ENCODE measurements at regions of chr6 and their contacts with region 1.

Region 1: DNA sequence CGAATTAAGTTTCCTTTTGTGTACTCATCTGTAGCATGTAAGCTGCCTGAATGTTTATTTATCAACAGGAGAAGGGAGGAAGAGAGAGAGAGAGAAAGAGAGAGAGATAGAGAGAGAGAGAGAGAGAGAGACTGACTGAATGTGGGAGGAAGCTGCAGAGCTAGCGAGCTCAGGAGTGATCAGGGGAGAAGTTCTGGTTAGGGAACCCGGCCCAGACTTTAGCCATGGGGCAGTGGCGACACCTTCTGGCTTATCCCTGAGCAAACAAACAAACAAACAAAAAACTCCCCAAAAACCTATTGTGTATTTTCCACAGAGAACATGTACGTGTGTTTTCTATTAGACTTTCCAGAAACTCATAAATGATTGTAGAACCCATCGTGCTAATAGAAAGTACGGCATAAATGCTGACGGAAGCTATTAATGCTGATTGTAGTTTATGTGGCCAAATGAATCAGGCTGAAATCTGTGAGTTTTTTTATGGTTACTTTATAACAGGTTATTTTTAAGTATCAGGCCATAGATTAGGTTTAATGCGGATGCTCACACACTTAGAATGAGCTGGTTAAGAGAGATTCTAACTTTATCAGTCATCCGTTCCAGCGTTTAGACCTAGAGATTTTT is 92.8 kb downstream of the CLIC5 start:
- DNase-seq: peak; percentile 29
- H3K4me3 ChIP-seq: no peak overlapping the region
- H3K27ac ChIP-seq: no peak overlapping the region
- H3K4me1 ChIP-seq: no peaks in the 10 kb centered on the region
- H3K27me3 ChIP-seq: no peaks in the 10 kb centered on the region
- CTCF ChIP-seq: peak; percentile 53 to 90

Region 2: DNA sequence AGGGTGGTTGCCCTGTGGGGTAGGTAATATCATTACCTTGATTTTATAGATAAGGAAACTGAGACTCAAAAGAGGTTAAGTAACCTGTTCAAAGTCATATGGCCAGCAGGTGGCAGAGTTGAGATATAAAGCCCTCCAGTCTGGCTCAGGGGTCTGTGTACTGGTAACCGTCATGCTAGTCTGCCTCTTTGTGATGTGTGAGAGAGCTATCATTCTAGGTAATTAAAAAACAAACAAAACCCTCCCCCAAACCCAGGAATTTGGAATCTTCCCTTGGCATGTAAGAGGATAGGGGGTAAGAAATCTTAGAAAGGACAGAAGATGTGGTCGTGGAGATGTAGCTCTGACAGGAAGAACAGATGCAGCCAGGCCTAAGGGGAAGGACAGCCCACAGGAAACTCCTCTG is 1329.3 kb before region 1 on chr6:
- CTCF ChIA-PET with region 1: no interaction called
- dilution Hi-C with region 1: no loop called
- in situ Hi-C with region 1: no loop called
- intact Hi-C with region 1: loop called (anchors 1 kb)
- DNase-seq: no peak
- H3K4me3 ChIP-seq: no peak overlapping the region
- H3K27ac ChIP-seq: no peak overlapping the region
- H3K4me1 ChIP-seq: no peaks in the 10 kb centered on the region
- H3K27me3 ChIP-seq: no peaks in the 10 kb centered on the region
- CTCF ChIP-seq: peak; percentile 40 to 54

Region 3: DNA sequence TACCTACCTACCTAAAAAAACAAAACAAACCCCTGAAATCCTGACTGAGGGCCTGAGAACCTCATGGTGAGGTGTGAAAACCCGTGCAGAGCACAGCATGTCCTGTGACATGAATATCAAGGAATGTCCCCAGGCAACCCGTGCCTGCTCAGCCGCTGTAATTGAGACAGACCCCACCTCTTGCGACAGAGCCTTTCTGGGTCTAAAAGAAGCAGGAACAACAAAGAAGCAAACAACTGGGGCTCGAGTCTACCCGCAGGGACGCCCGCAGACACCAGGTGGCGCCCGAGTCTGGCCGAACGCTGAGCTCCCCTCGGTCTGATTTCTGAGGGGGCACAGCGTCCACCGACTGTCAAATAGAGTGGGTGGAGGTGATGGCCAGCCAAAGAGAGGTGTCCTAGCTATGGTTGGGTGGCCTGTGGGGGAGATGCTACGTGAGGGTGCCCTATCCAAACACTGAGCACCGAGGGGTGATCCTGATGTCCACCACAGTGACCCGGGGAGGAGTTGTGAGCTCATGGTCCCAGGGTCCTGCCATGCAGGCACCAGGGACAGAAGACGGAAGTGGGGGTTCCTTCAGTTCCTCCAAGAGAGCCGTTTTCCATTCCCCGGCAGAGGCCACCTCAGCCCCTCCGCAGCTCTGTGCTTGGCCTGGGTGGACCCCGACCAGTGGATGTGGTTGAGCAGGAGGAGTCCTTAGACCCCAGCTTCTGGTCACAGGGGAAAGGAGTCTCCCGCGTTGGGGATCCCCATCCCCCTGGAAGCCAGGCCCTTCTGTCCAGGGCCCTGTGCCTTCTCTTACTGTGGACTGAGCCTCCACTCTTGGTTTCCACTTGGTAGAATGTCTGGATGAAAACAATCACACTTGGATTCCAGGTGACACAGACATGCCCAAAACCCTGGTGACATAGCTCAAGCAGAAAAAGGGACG is 1267.2 kb before region 1 on chr6:
- CTCF ChIA-PET with region 1: no interaction called
- dilution Hi-C with region 1: no loop called
- in situ Hi-C with region 1: loop called in 1 of 2 experiments (anchors 25 kb)
- intact Hi-C with region 1: loop called (anchors 1 kb)
- DNase-seq: peak; percentile 22
- H3K4me3 ChIP-seq: no peak overlapping the region
- H3K27ac ChIP-seq: no peak overlapping the region
- H3K4me1 ChIP-seq: peaks cover 9% of the 10 kb centered on the region
- H3K27me3 ChIP-seq: no peaks in the 10 kb centered on the region
- CTCF ChIP-seq: peak; percentile 88 to 93

Region 4: DNA sequence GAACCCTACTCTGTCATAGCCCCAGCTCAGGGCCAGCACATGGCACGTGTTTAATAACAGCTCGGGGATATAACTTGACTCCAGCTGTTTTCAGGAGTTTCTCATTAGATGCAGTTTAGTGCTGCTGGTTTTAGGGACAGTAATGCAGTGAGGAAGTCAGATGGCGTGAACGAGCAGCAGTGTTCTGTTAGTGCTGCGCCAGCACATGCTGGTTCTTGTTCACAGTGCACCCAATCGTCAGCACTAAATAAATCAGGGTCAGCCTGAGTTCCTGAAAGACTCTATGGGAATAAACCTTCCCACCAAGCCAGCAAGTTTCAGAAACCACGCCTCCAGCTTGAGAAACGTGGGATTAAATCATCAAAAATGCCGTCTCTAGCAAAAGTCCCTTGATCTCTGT is 309.2 kb before region 1 on chr6:
- CTCF ChIA-PET with region 1: no interaction called
- dilution Hi-C with region 1: no loop called
- in situ Hi-C with region 1: no loop called
- intact Hi-C with region 1: loop called (anchors 2 kb)
- DNase-seq: peak; percentile 96
- H3K4me3 ChIP-seq: no peak overlapping the region
- H3K27ac ChIP-seq: peak overlapping the region; percentile 23
- H3K4me1 ChIP-seq: peaks cover 31% of the 10 kb centered on the region
- H3K27me3 ChIP-seq: no peaks in the 10 kb centered on the region
- CTCF ChIP-seq: peak in 1 of 2 donors; percentile 28

Region 5: DNA sequence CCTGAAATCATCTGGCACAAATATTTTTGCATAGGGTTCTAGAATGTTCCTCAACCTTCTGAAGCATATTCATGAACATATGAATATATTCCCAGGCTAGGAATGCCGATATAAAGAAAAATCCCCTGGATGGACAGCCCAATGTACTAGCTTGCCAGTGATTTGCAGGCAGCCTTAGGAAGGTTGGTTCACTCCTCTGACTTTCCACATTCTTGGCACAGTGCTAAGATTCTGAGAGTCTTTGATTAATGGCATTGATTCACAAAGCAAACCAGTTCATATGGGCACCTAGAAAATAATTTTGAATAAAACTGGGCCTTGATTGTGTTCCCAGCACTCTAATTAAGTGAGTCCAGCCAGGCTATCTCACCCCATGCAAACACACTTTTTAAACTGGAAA is 150.0 kb after region 1 on chr6:
- CTCF ChIA-PET with region 1: no interaction called
- dilution Hi-C with region 1: no loop called
- in situ Hi-C with region 1: no loop called
- intact Hi-C with region 1: no loop called
- DNase-seq: no peak
- H3K4me3 ChIP-seq: no peak overlapping the region
- H3K27ac ChIP-seq: no peak overlapping the region
- H3K4me1 ChIP-seq: no peaks in the 10 kb centered on the region
- H3K27me3 ChIP-seq: peaks cover 7% of the 10 kb centered on the region
- CTCF ChIP-seq: no peak

Measured in mammary epithelial cell (primary cell).